PC-3 (cell line): ENCODE measurements at regions of chr2 and their contacts with region 1.

Region 1: GRCh38 chr2:5077439-5078089 is 614.6 kb upstream of the SOX11 start:
- DNase-seq: peak; percentile 71
- ATAC-seq: peak; percentile 87
- H3K4me3 ChIP-seq: no peak overlapping the region
- H3K27ac ChIP-seq: peak overlapping the region; percentile 11; the same call in 1 of the 2 replicates
- H3K4me1 ChIP-seq: peaks cover 11% of the 10 kb centered on the region
- H3K27me3 ChIP-seq: no peaks in the 10 kb centered on the region
- CTCF ChIP-seq: peak; percentile 57

Region 2: GRCh38 chr2:5164776-5165525 is 87.4 kb after region 1 on chr2:
- CTCF ChIA-PET with region 1: no interaction called
- POLR2A ChIA-PET with region 1: no interaction called
- intact Hi-C with region 1: loop called (anchors 1 kb)
- DNase-seq: peak; percentile 88
- ATAC-seq: peak; percentile 98
- H3K4me3 ChIP-seq: peak overlapping the region; percentile 22; the same call in 1 of the 2 replicates
- H3K27ac ChIP-seq: peak overlapping the region; percentile 68
- H3K4me1 ChIP-seq: peaks cover 20% of the 10 kb centered on the region
- H3K27me3 ChIP-seq: no peaks in the 10 kb centered on the region
- CTCF ChIP-seq: no peak

Region 3: DNA sequence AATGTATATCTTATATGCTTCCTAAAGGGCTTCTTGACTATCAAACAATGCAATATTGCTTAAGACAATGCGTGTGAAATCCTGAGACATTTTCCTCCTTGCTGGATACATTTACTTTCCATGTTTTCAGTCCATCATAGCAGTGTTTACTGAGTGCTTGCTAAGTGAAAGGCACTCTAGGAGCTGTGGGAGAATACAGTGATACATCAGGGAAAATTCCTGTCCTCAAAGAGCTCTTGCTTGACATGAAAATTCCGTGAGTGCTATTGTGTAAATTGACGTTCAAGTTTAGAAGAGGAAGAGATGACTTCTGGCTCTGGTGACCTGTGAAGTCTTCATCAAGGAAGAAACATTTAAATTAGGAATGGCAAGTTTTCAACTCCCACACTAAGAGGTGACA is 165.2 kb after region 1 on chr2:
- CTCF ChIA-PET with region 1: no interaction called
- POLR2A ChIA-PET with region 1: no interaction called
- intact Hi-C with region 1: loop called (anchors 5 kb)
- DNase-seq: no peak
- ATAC-seq: no peak
- H3K4me3 ChIP-seq: no peak overlapping the region
- H3K27ac ChIP-seq: no peak overlapping the region
- H3K4me1 ChIP-seq: no peaks in the 10 kb centered on the region
- H3K27me3 ChIP-seq: no peaks in the 10 kb centered on the region
- CTCF ChIP-seq: no peak

Region 4: GRCh38 chr2:5269008-5269407 is 191.4 kb after region 1 on chr2:
- CTCF ChIA-PET with region 1: no interaction called
- POLR2A ChIA-PET with region 1: no interaction called
- intact Hi-C with region 1: loop called (anchors 10 kb)
- DNase-seq: no peak
- ATAC-seq: no peak
- H3K4me3 ChIP-seq: no peak overlapping the region
- H3K27ac ChIP-seq: no peak overlapping the region
- H3K4me1 ChIP-seq: no peaks in the 10 kb centered on the region
- H3K27me3 ChIP-seq: no peaks in the 10 kb centered on the region
- CTCF ChIP-seq: no peak